Natural killer cell (primary cell): ENCODE measurements at regions of chr2 and their contacts with region 1.

Region 1: GRCh38 chr2:216350214-216350789 is 22.0 kb downstream of the MARCHF4 start:
- DNase-seq: peak; percentile 47 to 65
- ATAC-seq: peak; percentile 75 to 80 (median 76)
- H3K4me3 ChIP-seq: no peak overlapping the region
- H3K4me3 Mint-ChIP-seq: peak overlapping the region; percentile 80
- H3K27ac ChIP-seq: peak overlapping the region; percentile 63
- H3K27ac Mint-ChIP-seq: peak overlapping the region; percentile 86 to 95
- H3K4me1 ChIP-seq: peaks cover 58% of the 10 kb centered on the region
- H3K4me1 Mint-ChIP-seq: peaks cover 74 to 78% of the 10 kb centered on the region in 2 donors
- H3K27me3 ChIP-seq: no peaks in the 10 kb centered on the region
- H3K27me3 Mint-ChIP-seq: no peaks in the 10 kb centered on the region
- CTCF ChIP-seq: no peak

Region 2: GRCh38 chr2:216315789-216316603 is 34.3 kb before region 1 on chr2:
- intact Hi-C with region 1: loop called (anchors 5 kb)
- DNase-seq: no peak
- ATAC-seq: peak in 1 of 3 donors; percentile 29
- H3K4me3 ChIP-seq: no peak overlapping the region
- H3K4me3 Mint-ChIP-seq: no peak overlapping the region
- H3K27ac ChIP-seq: no peak overlapping the region
- H3K27ac Mint-ChIP-seq: no peak overlapping the region
- H3K4me1 ChIP-seq: peaks cover 15% of the 10 kb centered on the region
- H3K4me1 Mint-ChIP-seq: peaks cover 23 to 26% of the 10 kb centered on the region in 2 donors
- H3K27me3 ChIP-seq: no peaks in the 10 kb centered on the region
- H3K27me3 Mint-ChIP-seq: peaks cover 0 to 3% of the 10 kb centered on the region in 2 donors
- CTCF ChIP-seq: no peak